H1 (cell line): ENCODE measurements at regions of chr11 and their contacts with region 1.

Region 1: DNA sequence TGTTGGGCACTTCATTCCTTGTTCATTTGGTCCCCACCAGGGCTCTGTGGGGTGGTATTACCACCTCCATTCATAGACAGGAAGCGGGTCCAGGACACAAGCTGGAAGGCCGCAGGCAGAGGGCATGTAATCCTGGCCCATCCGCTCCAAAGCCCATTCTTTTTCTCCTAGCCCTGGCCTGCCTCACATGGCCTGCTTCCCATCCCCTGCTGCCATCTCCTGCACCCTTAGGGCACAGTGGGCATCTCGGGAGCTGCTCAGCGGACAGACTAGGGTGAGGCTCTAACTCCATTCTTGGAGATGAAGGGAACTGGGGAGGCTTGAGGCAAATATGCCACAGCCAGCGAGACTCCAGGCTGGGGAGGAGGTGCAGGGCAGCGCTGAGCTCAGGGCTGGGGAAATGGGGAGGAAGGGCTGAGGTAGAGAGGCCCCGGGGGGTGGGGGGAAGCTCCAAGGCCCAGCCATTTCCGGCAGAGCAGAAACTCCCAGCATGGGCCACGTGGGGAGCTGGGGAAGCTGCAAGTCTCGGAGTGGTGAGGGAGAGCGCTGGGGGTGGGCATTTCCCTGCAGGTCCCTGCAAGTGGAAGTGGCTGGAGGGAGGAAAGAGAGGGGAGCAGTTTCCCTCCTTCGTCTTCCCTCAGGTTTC is 14.3 kb upstream of the BCL9L start:
- DNase-seq: no peak
- H3K4me3 ChIP-seq: no peak overlapping the region
- H3K27ac ChIP-seq: no peak overlapping the region
- H3K4me1 ChIP-seq: peaks cover 7 to 17% (median 12%) of the 10 kb centered on the region in 4 experiments
- H3K27me3 ChIP-seq: 0 out of 7 replicates have a peak, but pooled peaks cover 0 to 4% (median 1%) of the 10 kb centered on the region in 4 experiments
- CTCF ChIP-seq: no peak
- EP300 ChIP-seq: no peak
- POLR2A ChIP-seq: no peak
- RAD21 ChIP-seq: no peak

Region 2: DNA sequence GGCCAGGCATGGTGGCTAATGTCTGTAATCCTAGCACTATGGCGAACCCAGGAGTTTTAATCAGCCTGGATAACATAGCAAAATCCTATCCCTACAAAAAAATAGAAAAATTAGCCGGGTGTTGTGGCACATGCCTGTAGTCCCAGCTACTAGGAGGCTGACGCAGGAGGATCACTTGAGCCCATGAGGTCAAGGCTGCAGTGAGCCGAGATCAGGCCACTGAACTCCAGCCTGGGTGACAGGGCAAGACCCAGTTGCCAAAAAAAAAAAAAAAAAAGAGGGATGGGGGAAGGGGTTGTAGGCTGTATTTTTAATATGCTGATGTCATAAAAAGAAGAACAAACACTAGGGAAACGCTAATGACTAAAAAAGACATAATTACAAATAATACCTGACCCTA is 161.2 kb before region 1 on chr11:
- CTCF ChIA-PET with region 1: no interaction called
- POLR2A ChIA-PET with region 1: no interaction called
- DNase-seq: no peak
- H3K4me3 ChIP-seq: no peak overlapping the region
- H3K27ac ChIP-seq: no peak overlapping the region
- H3K4me1 ChIP-seq: no peaks in the 10 kb centered on the region
- H3K27me3 ChIP-seq: no peaks in the 10 kb centered on the region
- CTCF ChIP-seq: no peak
- EP300 ChIP-seq: no peak
- POLR2A ChIP-seq: no peak
- RAD21 ChIP-seq: no peak

Region 3: DNA sequence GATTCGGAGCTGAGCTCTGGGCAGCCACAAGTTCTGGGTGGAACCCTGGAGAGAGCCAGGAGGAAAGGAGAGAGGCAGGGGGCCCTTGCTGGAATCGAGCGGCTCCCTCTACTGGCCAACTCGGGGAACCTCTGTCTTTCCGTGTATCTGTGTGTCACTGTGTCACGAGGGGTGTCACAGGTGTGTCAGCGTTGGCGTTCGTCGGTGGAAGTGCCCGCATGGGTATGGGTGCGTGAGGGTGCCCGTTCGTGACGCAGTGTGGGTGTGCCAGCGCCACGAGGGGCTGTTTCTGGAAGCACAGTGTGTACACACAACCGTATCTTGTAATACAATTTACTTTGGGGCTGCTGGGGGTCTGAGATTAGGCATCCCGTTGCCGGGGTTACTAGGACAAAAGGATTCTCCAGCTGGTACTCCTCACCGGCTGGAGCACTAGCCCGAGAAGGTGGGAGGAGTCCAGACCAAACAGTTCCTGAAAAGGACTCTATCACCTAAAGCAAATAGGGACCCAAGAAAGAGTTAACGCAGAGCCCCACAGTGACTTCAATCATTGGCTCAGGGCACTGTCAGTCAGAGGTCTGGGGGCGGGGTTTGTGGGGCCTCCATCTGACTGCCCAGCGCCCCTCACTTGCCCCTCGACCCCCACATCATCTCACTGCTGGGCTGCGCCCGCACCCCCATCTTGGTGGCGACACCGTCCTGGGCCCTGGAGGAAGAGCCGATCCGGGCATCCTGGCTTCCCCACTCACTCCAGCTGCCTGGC is 11.8 kb before region 1 on chr11:
- CTCF ChIA-PET with region 1: interaction called, 28 read pairs
- POLR2A ChIA-PET with region 1: interaction called, 12 read pairs
- DNase-seq: peak in 1 of 2 experiments; percentile 99
- H3K4me3 ChIP-seq: peak overlapping the region; percentile 86 to 95 (median 88)
- H3K27ac ChIP-seq: no peak overlapping the region
- H3K4me1 ChIP-seq: peaks cover 7 to 31% (median 20%) of the 10 kb centered on the region in 4 experiments
- H3K27me3 ChIP-seq: peaks cover 0 to 6% (median 0%) of the 10 kb centered on the region in 4 experiments; a peak in 3 of 7 replicates
- CTCF ChIP-seq: peak; percentile 80 to 92 (median 88)
- EP300 ChIP-seq: no peak
- POLR2A ChIP-seq: no peak
- RAD21 ChIP-seq: peak; percentile 64 to 76

Region 4: GRCh38 chr11:118979434-118979833 is 39.4 kb after region 1 on chr11:
- CTCF ChIA-PET with region 1: no interaction called
- POLR2A ChIA-PET with region 1: no interaction called
- DNase-seq: no peak
- H3K4me3 ChIP-seq: no peak overlapping the region
- H3K27ac ChIP-seq: no peak overlapping the region
- H3K4me1 ChIP-seq: peaks cover 0 to 18% (median 10%) of the 10 kb centered on the region in 4 experiments; a peak in 5 of 7 replicates
- H3K27me3 ChIP-seq: peaks cover 0 to 5% (median 0%) of the 10 kb centered on the region in 4 experiments; a peak in 1 of 7 replicates
- CTCF ChIP-seq: peak; percentile 9 to 25 (median 20); a peak in 3 of 4 replicates
- EP300 ChIP-seq: no peak
- POLR2A ChIP-seq: no peak
- RAD21 ChIP-seq: no peak; a peak in 1 of 4 replicates